Breast epithelium (tissue), 4 donors: ENCODE measurements at regions of chr12 and their contacts with region 1.

Region 1: DNA sequence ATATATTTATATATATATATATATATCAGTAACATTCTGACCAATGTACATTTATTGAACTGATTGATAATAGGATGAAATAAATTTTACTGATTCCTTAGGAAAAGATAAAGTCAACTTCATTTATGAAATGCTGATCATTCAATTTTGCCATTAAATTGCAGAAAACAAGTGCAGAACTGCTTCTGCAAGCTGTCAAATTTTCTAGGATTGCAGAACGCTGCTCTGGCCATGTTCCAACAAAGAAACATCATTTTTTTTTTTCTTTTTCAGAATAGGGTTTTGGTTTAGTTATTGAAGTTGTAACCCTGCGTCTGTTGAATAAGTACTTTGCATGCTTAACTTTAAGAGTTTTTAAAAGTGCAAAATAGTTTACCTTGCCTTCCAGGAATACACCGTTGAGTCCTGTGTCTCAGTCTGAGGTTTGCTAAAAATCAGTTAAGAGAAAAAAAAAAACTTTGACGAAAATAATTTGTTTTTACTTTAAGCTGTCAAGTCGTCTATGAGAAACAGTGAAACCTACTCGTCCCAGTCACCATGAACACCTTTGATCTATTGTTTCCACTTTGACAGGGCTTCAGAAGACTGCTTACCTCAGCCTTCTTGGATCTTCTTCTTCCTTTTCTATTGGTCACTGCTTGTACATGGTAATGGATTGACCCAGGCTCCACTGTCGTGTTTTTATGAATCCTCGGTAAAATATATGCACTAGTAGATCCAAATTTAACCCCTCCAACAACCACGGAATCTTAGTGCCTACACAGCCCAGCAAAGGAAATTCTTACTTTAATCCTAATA is at the start of gene KERA:
- DNase-seq: no peak
- H3K4me3 ChIP-seq: no peak within 1 kb of the TSS
- H3K27ac ChIP-seq: no peak within 1 kb of the TSS
- H3K4me1 ChIP-seq: no peaks in the 10 kb centered on the region
- H3K27me3 ChIP-seq: no peaks in the 10 kb centered on the region
- CTCF ChIP-seq: no peak
- POLR2A ChIP-seq: no peak
- total RNA-seq, gene KERA: 0.15 to 0.33 TPM in 2 of 3 donors, not detected in the other

Region 2: GRCh38 chr12:91091916-91092715 is 34.5 kb after region 1 on chr12:
- intact Hi-C with region 1: loop called (anchors 2 kb)
- DNase-seq: no peak
- H3K4me3 ChIP-seq: no peak overlapping the region
- H3K27ac ChIP-seq: no peak overlapping the region
- H3K4me1 ChIP-seq: no peaks in the 10 kb centered on the region
- H3K27me3 ChIP-seq: no peaks in the 10 kb centered on the region
- CTCF ChIP-seq: no peak
- POLR2A ChIP-seq: no peak

Region 3: GRCh38 chr12:92108651-92109050 is 1051.1 kb after region 1 on chr12:
- intact Hi-C with region 1: no loop called
- DNase-seq: no peak
- H3K4me3 ChIP-seq: no peak overlapping the region
- H3K27ac ChIP-seq: no peak overlapping the region
- H3K4me1 ChIP-seq: no peaks in the 10 kb centered on the region
- H3K27me3 ChIP-seq: no peaks in the 10 kb centered on the region
- CTCF ChIP-seq: no peak
- POLR2A ChIP-seq: no peak